ENCODE measurements at regions of chr4 and their contacts with region 1.

Region 1: GRCh38 chr4:119314356-119314755 is 7.6 kb downstream of the FABP2 start:
- DNase-seq: no peak
- H3K4me3 ChIP-seq: no peak overlapping the region
- H3K27ac ChIP-seq: no peak overlapping the region
- H3K4me1 ChIP-seq: no peaks in the 10 kb centered on the region
- H3K27me3 ChIP-seq: no peaks in the 10 kb centered on the region
- CTCF ChIP-seq: no peak

Region 2: DNA sequence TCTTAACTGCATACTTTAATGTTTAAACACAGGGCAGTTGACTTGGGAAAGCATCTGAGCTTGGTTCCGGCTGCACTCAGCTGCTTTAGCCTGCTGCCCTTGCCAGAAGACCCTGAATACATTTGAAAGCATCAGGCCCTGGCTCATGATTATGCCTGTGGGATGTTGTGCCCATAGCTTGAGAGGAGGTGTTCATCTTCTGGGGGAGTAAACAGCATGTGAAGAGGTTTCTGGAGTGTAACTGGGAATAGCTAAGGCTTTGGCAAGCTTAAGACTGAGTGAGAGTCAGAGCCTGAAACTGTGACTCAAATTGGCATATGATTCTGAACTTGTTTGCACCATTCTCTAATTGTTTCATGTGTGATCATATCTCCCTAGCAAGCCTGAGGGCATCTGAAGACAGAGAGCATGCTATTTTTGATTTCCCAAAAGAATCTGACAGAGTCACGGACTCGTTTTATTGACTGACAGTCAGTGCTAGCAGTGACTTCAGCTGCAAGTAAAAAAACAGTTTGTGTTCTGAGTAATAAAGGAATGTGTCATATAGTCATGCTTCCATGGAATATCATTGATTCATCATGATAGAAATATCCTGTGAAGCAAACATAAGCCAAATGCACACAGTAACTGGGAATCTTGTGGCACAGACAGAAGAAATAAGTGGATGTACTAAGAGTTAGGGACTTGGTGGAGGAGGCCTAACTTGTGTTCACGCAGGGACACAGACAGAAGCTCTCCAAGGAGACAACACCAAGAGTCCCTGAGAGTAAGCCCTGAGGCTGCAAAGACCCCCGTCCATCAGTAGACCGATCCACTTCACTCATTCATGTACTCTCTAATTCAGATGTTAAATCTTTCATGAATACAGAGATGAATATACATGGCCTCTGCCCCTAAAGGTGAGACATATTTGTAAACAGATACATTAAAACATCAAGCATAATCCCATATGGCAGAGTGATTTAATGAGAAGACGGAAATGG is 325.0 kb before region 1 on chr4:
- intact Hi-C with region 1: no loop called
- DNase-seq: no peak
- H3K4me3 ChIP-seq: no peak overlapping the region
- H3K27ac ChIP-seq: peak overlapping the region; percentile 53
- H3K4me1 ChIP-seq: no peaks in the 10 kb centered on the region
- H3K27me3 ChIP-seq: no peaks in the 10 kb centered on the region
- CTCF ChIP-seq: no peak

Region 3: GRCh38 chr4:119162174-119162573 is 152.2 kb before region 1 on chr4:
- intact Hi-C with region 1: no loop called
- DNase-seq: no peak
- H3K4me3 ChIP-seq: no peak overlapping the region
- H3K27ac ChIP-seq: no peak overlapping the region
- H3K4me1 ChIP-seq: no peaks in the 10 kb centered on the region
- H3K27me3 ChIP-seq: no peaks in the 10 kb centered on the region
- CTCF ChIP-seq: no peak

Region 4: DNA sequence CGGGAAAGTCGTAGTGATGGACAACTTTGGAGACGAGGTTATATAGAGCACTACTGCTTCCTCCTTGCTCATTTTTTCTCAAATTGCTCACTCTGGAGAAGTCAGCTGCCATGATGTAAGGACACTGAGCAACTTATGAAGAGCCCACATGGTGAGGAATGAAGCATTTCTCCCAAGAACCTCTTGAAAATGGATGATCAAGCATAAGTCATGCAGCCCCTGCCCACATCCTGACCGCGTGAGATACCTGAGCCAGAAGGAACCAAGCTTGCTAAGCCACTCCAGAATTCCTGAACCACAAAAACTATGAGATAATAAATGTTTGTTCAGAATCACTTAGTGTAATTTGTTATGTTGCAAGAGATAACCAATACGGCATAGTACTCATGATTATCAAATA is 271.4 kb after region 1 on chr4:
- intact Hi-C with region 1: no loop called
- DNase-seq: no peak
- H3K4me3 ChIP-seq: no peak overlapping the region
- H3K27ac ChIP-seq: no peak overlapping the region
- H3K4me1 ChIP-seq: no peaks in the 10 kb centered on the region
- H3K27me3 ChIP-seq: no peaks in the 10 kb centered on the region
- CTCF ChIP-seq: no peak

Region 5: GRCh38 chr4:120056246-120056645 is 741.9 kb after region 1 on chr4:
- intact Hi-C with region 1: loop called (anchors 5 kb)
- DNase-seq: no peak
- H3K4me3 ChIP-seq: no peak overlapping the region
- H3K27ac ChIP-seq: peak overlapping the region; percentile 45
- H3K4me1 ChIP-seq: peaks cover 4% of the 10 kb centered on the region
- H3K27me3 ChIP-seq: no peaks in the 10 kb centered on the region
- CTCF ChIP-seq: no peak